Activated B cell treated with CpG ODN at 0.5 μM for 24 hours (primary cell): ENCODE measurements at regions of chr4 and their contacts with region 1.

Region 1: GRCh38 chr4:7042697-7043464 is at the start of gene TADA2B:
- DNase-seq: peak; percentile 96
- ATAC-seq: peak; percentile 87
- H3K4me3 Mint-ChIP-seq: peak within 1 kb of the TSS; percentile 93
- H3K27ac Mint-ChIP-seq: peak within 1 kb of the TSS; percentile 85
- H3K4me1 Mint-ChIP-seq: peaks cover 54% of the 10 kb centered on the region
- H3K27me3 Mint-ChIP-seq: no peaks in the 10 kb centered on the region
- CTCF ChIP-seq: no peak
- total RNA-seq, gene TADA2B: 26.7 and 31.8 TPM in 2 replicates

Region 2: GRCh38 chr4:6909073-6909965 is 133.6 kb before region 1 on chr4 and contains the start of gene TBC1D14:
- CTCF ChIA-PET with region 1: no interaction called
- POLR2A ChIA-PET with region 1: interaction called, 28 read pairs
- intact Hi-C with region 1: loop called (anchors 1 kb)
- DNase-seq: peak; percentile 88
- ATAC-seq: peak; percentile 89
- H3K4me3 Mint-ChIP-seq: peak within 1 kb of the TSS; percentile 87
- H3K27ac Mint-ChIP-seq: peak within 1 kb of the TSS; percentile 86
- H3K4me1 Mint-ChIP-seq: peaks cover 43% of the 10 kb centered on the region
- H3K27me3 Mint-ChIP-seq: peaks cover 5% of the 10 kb centered on the region
- CTCF ChIP-seq: no peak
- total RNA-seq, gene TBC1D14: 35.1 and 35.2 TPM in 2 replicates

Region 3: GRCh38 chr4:6974138-6974848 is 68.6 kb before region 1 on chr4:
- CTCF ChIA-PET with region 1: interaction called, 10 read pairs
- POLR2A ChIA-PET with region 1: interaction called, 3 read pairs
- intact Hi-C with region 1: loop called (anchors 1 kb)
- DNase-seq: peak; percentile 66
- ATAC-seq: peak; percentile 95
- H3K4me3 Mint-ChIP-seq: no peak overlapping the region
- H3K27ac Mint-ChIP-seq: no peak overlapping the region
- H3K4me1 Mint-ChIP-seq: peaks cover 32% of the 10 kb centered on the region
- H3K27me3 Mint-ChIP-seq: no peaks in the 10 kb centered on the region
- CTCF ChIP-seq: peak; percentile 39

Region 4: DNA sequence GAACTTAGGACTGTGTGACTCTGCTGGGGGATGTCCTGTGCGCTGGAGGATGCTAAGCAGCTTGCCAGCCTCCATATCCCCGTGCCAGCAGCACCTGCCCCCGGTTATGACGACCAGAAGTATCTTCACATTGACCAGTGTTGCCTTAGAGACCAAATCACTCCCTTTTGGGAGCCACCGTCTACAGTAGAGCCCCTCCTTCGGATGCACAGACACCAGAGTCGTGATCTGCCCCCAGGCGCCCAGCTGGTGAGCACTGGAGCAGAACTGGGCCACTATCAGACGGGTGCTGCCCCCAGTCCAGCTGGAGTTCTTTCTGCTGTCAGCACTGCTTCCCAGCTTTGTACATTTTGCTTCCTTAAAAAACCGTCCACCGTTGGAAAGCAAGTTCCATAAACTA is 29.7 kb before region 1 on chr4:
- CTCF ChIA-PET with region 1: interaction called, 6 read pairs
- POLR2A ChIA-PET with region 1: interaction called, 5 read pairs
- intact Hi-C with region 1: loop called (anchors 1 kb)
- DNase-seq: no peak
- ATAC-seq: peak; percentile 60
- H3K4me3 Mint-ChIP-seq: no peak overlapping the region
- H3K27ac Mint-ChIP-seq: peak overlapping the region; percentile 67
- H3K4me1 Mint-ChIP-seq: peaks cover 20% of the 10 kb centered on the region
- H3K27me3 Mint-ChIP-seq: no peaks in the 10 kb centered on the region
- CTCF ChIP-seq: no peak

Region 5: DNA sequence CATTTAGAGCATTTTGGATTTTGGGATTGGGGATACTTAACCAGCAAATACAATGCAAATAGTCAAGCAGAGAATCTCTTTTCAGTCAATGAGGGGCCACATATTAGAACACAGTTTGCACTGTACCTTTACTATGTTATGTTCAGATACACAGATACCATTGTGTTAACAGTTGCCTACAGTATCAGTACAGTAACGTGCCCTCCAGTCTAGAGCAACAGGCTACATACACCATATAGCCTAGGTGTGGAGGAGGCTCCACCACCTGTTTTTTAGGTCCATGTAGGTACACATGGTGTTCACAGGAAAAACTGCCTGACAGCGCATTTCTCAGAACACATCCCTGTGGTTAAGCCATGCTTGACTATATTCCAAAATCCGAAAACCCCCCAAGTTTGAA is 15.9 kb after region 1 on chr4:
- CTCF ChIA-PET with region 1: interaction called, 4 read pairs
- POLR2A ChIA-PET with region 1: interaction called, 5 read pairs
- intact Hi-C with region 1: loop called (anchors 2 kb)
- DNase-seq: no peak
- ATAC-seq: peak; percentile 21
- H3K4me3 Mint-ChIP-seq: no peak overlapping the region
- H3K27ac Mint-ChIP-seq: peak overlapping the region; percentile 56
- H3K4me1 Mint-ChIP-seq: peaks cover 18% of the 10 kb centered on the region
- H3K27me3 Mint-ChIP-seq: no peaks in the 10 kb centered on the region
- CTCF ChIP-seq: no peak

Region 6: DNA sequence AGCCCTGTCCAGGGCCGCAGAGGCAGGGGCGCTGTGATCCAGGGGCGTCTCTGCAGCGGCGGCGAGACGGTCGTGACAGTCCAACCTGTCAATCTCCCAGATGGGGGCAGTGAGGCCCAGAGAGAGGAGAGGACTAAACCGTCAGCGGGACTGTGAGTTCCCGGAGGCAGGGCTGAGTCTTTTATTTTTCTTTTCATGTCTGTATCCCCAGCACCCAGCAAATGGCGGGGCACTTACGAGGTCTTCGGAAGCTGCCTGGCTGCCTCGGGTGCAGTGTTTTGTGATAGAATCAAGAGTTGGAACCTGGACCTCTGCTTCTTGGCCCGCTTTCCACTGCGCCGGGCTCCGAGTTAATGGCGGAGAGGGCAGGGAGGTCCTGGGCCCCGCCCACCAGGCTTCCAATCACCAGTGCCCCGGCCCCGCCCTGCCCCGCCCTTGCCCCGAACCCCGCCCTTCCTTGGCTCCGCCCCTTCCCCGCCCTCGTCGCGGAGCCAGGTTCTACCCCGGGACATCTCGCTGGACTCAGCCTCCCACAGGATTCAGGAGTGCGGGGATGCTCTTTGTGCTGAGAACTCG is 60.2 kb after region 1 on chr4:
- CTCF ChIA-PET with region 1: no interaction called
- POLR2A ChIA-PET with region 1: no interaction called
- intact Hi-C with region 1: loop called (anchors 1 kb)
- DNase-seq: peak; percentile 65
- ATAC-seq: peak; percentile 96
- H3K4me3 Mint-ChIP-seq: peak overlapping the region; percentile 91
- H3K27ac Mint-ChIP-seq: peak overlapping the region; percentile 46
- H3K4me1 Mint-ChIP-seq: peaks cover 20% of the 10 kb centered on the region
- H3K27me3 Mint-ChIP-seq: peaks cover under 1% of the 10 kb centered on the region
- CTCF ChIP-seq: no peak